ENCODE measurements at regions of chr3 and their contacts with region 1.

Region 1: GRCh38 chr3:49445381-49445780 is 16.3 kb upstream of the NICN1 start:
- DNase-seq: no peak
- H3K4me3 Mint-ChIP-seq: no peak overlapping the region
- H3K27ac Mint-ChIP-seq: no peak overlapping the region
- H3K4me1 Mint-ChIP-seq: peaks cover 7% of the 10 kb centered on the region
- H3K27me3 Mint-ChIP-seq: no peaks in the 10 kb centered on the region
- CTCF ChIP-seq: no peak

Region 2: GRCh38 chr3:49428697-49429100 is 16.7 kb before region 1 on chr3:
- CTCF ChIA-PET with region 1: interaction called, 6 read pairs
- POLR2A ChIA-PET with region 1: interaction called, 12 read pairs
- intact Hi-C with region 1: no loop called
- DNase-seq: no peak
- H3K4me3 Mint-ChIP-seq: peak overlapping the region; percentile 89
- H3K27ac Mint-ChIP-seq: peak overlapping the region; percentile 99
- H3K4me1 Mint-ChIP-seq: peaks cover 5% of the 10 kb centered on the region
- H3K27me3 Mint-ChIP-seq: no peaks in the 10 kb centered on the region
- CTCF ChIP-seq: no peak

Measured in MCF 10A (cell line).